Sigmoid colon (tissue), 7 donors: ENCODE measurements at regions of chr7 and their contacts with region 1.

Region 1: GRCh38 chr7:100673300-100673941 is at the start of gene GNB2:
- DNase-seq: peak; percentile 100
- H3K4me3 ChIP-seq: peak within 1 kb of the TSS; percentile 91 to 99 (median 92)
- H3K27ac ChIP-seq: peak within 1 kb of the TSS; percentile 97 to 99 (median 98)
- H3K4me1 ChIP-seq: peaks cover 0 to 27% (median 14%) of the 10 kb centered on the region in 4 donors
- H3K27me3 ChIP-seq: no peaks in the 10 kb centered on the region
- CTCF ChIP-seq: no peak
- EP300 ChIP-seq: peak in 2 of 4 donors; percentile 5 to 11
- POLR2A ChIP-seq: no peak
- total RNA-seq, gene GNB2: 133 to 199 (median 163) TPM

Region 2: DNA sequence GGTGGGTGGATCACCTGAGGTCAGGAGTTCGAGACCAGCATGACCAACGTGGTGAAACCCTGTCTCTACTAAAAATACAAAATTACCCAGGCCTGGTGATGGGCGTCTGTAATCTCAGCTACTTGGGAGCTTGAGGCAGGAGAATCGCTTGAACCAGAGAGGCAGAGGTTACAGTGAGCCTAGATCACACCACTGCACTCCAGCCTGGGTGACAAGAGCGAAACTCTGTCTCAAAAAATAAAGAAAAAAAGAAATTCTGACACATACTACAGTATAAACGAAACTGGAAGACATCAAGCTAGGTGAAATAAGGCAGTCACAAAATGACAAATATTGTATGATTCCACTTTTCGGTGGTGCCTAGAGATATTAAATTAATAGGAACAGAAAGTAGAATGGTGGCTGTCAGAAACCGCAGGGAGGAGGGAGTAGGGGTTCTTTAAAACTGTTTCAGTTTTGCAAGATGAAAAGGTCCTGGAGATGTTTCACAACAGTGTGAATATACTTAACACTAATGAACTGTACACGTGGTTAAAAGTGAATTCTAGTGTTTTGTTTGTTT is 276.9 kb before region 1 on chr7:
- intact Hi-C with region 1: no loop called
- DNase-seq: no peak
- H3K4me3 ChIP-seq: no peak overlapping the region
- H3K27ac ChIP-seq: peak overlapping the region in 1 of 4 donors; percentile 31
- H3K4me1 ChIP-seq: no peaks in the 10 kb centered on the region
- H3K27me3 ChIP-seq: no peaks in the 10 kb centered on the region
- CTCF ChIP-seq: no peak
- EP300 ChIP-seq: no peak
- POLR2A ChIP-seq: no peak

Region 3: DNA sequence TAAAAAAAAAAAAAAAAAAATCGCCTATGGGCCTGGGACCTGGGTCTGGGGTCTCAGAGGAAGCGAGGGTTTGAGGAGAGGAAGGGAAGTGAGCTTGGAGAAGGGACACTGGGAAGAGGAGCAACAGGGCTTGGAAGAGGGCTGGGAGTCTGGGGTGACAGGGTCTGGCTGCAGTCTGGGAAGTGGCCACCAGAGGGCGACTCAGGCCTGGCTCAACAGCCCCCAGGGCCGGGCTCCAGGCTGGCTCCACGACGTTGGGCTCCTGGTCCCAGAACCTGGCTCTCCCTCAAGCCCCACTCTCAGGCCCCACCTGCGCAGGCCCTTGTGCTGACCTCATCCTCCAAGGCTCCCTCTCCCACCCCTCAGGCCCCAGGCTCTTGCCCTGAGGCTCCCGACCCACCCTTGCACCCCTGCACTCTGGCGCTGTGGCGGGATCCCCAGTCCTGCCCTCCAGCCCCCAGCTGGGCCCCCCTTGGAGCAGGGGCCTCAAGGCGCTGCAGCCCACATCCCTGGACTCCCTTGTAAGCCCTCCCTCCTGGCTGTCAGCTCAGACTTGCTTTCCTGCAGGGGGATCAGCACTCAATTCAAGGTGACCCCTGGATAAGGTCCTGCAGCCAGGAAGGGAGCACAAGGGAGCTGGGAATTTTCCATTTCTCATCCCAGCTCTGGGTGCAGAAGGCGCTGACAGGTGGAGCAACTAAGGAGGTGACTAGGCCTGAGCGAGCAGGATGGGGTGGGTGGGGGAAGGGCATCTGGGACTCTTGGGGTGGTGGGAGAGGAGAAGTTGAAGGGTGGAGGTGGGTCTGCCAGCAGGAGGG is 204.0 kb before region 1 on chr7:
- intact Hi-C with region 1: loop called (anchors 5 kb)
- DNase-seq: peak; percentile 94
- H3K4me3 ChIP-seq: no peak overlapping the region
- H3K27ac ChIP-seq: peak overlapping the region; percentile 38 to 77 (median 60)
- H3K4me1 ChIP-seq: peaks cover 0 to 83% (median 69%) of the 10 kb centered on the region in 4 donors
- H3K27me3 ChIP-seq: no peaks in the 10 kb centered on the region
- CTCF ChIP-seq: peak; percentile 87 to 98 (median 95)
- EP300 ChIP-seq: no peak
- POLR2A ChIP-seq: no peak

Region 4: GRCh38 chr7:100586266-100587025 is 87.0 kb before region 1 on chr7 and contains the start of gene FBXO24:
- intact Hi-C with region 1: loop called (anchors 1 kb)
- DNase-seq: peak; percentile 100
- H3K4me3 ChIP-seq: peak within 1 kb of the TSS; percentile 90 to 99 (median 94)
- H3K27ac ChIP-seq: peak within 1 kb of the TSS; percentile 91 to 96 (median 94)
- H3K4me1 ChIP-seq: peaks cover 0 to 44% (median 35%) of the 10 kb centered on the region in 4 donors
- H3K27me3 ChIP-seq: peaks cover 0 to 11% (median 0%) of the 10 kb centered on the region in 3 donors
- CTCF ChIP-seq: no peak
- EP300 ChIP-seq: no peak
- POLR2A ChIP-seq: peak; percentile 17 to 31
- total RNA-seq, gene FBXO24: 0.27 to 2.8 (median 0.71) TPM in 3 of 4 donors, not detected in the other

Region 5: GRCh38 chr7:100611974-100612729 is 61.3 kb before region 1 on chr7 and contains the start of gene MOSPD3:
- intact Hi-C with region 1: loop called (anchors 2 kb)
- DNase-seq: peak; percentile 100
- H3K4me3 ChIP-seq: peak within 1 kb of the TSS; percentile 57 to 91 (median 79)
- H3K27ac ChIP-seq: peak within 1 kb of the TSS; percentile 92 to 97 (median 94)
- H3K4me1 ChIP-seq: peaks cover 0 to 16% (median 13%) of the 10 kb centered on the region in 4 donors
- H3K27me3 ChIP-seq: no peaks in the 10 kb centered on the region
- CTCF ChIP-seq: peak in 1 of 4 experiments; percentile 10
- EP300 ChIP-seq: peak in 1 of 4 donors; percentile 5
- POLR2A ChIP-seq: peak; percentile 76 to 84
- total RNA-seq, gene MOSPD3: 8.0 to 16.4 (median 12.0) TPM

Region 6: GRCh38 chr7:100691676-100692577 is 18.5 kb after region 1 on chr7:
- intact Hi-C with region 1: loop called (anchors 2 kb)
- DNase-seq: peak; percentile 89
- H3K4me3 ChIP-seq: peak overlapping the region in 3 of 4 donors; percentile 8 to 99 (median 95)
- H3K27ac ChIP-seq: peak overlapping the region; percentile 38 to 95 (median 84)
- H3K4me1 ChIP-seq: peaks cover 0 to 58% (median 54%) of the 10 kb centered on the region in 4 donors
- H3K27me3 ChIP-seq: no peaks in the 10 kb centered on the region
- CTCF ChIP-seq: peak; percentile 74 to 93 (median 90)
- EP300 ChIP-seq: no peak
- POLR2A ChIP-seq: no peak

Region 7: GRCh38 chr7:100799014-100799896 is 125.8 kb after region 1 on chr7:
- intact Hi-C with region 1: no loop called
- DNase-seq: peak; percentile 85
- H3K4me3 ChIP-seq: no peak overlapping the region
- H3K27ac ChIP-seq: no peak overlapping the region
- H3K4me1 ChIP-seq: peaks cover 0 to 31% (median 25%) of the 10 kb centered on the region in 4 donors
- H3K27me3 ChIP-seq: peaks cover 0 to 13% (median 0%) of the 10 kb centered on the region in 3 donors
- CTCF ChIP-seq: peak; percentile 70 to 84 (median 78)
- EP300 ChIP-seq: no peak
- POLR2A ChIP-seq: no peak

Region 8: GRCh38 chr7:101094416-101095375 is 421.3 kb after region 1 on chr7:
- intact Hi-C with region 1: no loop called
- DNase-seq: peak; percentile 66
- H3K4me3 ChIP-seq: no peak overlapping the region
- H3K27ac ChIP-seq: peak overlapping the region in 1 of 4 donors; percentile 50
- H3K4me1 ChIP-seq: peaks cover 0 to 21% (median 11%) of the 10 kb centered on the region in 4 donors
- H3K27me3 ChIP-seq: no peaks in the 10 kb centered on the region
- CTCF ChIP-seq: peak in 3 of 4 experiments; percentile 45 to 63 (median 46)
- EP300 ChIP-seq: no peak
- POLR2A ChIP-seq: no peak